ENCODE measurements at regions of chr7 and their contacts with region 1.

Region 1: GRCh38 chr7:22726345-22727185 is 435 bp upstream of the IL6 start:
- DNase-seq: no peak
- ATAC-seq: peak; percentile 83
- H3K4me3 ChIP-seq: no peak overlapping the region
- H3K27ac ChIP-seq: peak overlapping the region; percentile 62
- H3K4me1 ChIP-seq: peaks cover 24% of the 10 kb centered on the region
- H3K27me3 ChIP-seq: no peaks in the 10 kb centered on the region
- CTCF ChIP-seq: peak; percentile 88

Region 2: DNA sequence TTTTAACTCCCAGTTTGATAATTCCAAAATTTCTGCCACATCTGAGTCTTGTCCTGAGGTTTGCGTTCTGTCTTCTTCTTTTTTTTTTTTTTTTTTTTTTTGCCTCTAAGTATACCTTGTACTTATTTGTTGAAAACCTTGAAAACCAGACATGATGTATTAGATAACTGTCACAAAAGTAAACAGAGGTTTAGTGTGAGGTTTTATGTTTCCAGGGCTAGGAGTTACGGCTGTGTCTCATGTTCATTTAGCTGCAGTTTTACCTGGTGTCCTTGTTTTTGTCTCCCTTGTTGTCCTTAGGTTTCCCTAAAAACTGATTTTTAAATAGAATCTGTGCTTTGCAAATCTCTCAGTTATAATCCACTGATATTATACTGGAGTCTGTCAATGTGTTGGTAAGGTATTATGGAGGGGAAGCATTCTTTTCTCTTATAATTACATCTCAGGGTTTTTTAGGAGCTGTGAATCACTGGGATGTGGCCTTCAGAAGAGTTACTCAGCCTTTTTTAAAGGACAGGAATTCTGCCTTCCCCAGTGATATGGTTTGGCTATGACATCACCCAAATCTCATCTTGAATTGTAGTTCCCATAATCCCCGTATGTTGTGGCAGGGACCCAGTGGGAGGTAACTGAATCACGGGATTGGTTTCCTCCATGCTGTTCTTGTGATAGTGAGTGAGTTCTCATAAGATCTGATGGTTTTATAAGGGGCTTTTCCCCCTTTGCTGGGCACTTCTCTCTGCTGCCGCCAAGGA is 875.9 kb before region 1 on chr7:
- CTCF ChIA-PET with region 1: no interaction called
- POLR2A ChIA-PET with region 1: no interaction called
- in situ Hi-C with region 1: no loop called
- intact Hi-C with region 1: no loop called
- DNase-seq: no peak
- ATAC-seq: no peak
- H3K4me3 ChIP-seq: no peak overlapping the region
- H3K27ac ChIP-seq: no peak overlapping the region
- H3K4me1 ChIP-seq: no peaks in the 10 kb centered on the region
- H3K27me3 ChIP-seq: no peaks in the 10 kb centered on the region
- CTCF ChIP-seq: no peak

Region 3: GRCh38 chr7:22016507-22016906 is 710.1 kb before region 1 on chr7:
- CTCF ChIA-PET with region 1: no interaction called
- POLR2A ChIA-PET with region 1: no interaction called
- in situ Hi-C with region 1: no loop called
- intact Hi-C with region 1: no loop called
- DNase-seq: no peak
- ATAC-seq: no peak
- H3K4me3 ChIP-seq: no peak overlapping the region
- H3K27ac ChIP-seq: no peak overlapping the region
- H3K4me1 ChIP-seq: no peaks in the 10 kb centered on the region
- H3K27me3 ChIP-seq: peaks cover 10% of the 10 kb centered on the region
- CTCF ChIP-seq: no peak

Region 4: GRCh38 chr7:22565315-22565811 is 161.2 kb before region 1 on chr7:
- CTCF ChIA-PET with region 1: interaction called, 98 read pairs
- POLR2A ChIA-PET with region 1: interaction called, 4 read pairs
- in situ Hi-C with region 1: no loop called
- intact Hi-C with region 1: loop called (anchors 1 kb)
- DNase-seq: peak; percentile 66
- ATAC-seq: no peak
- H3K4me3 ChIP-seq: peak overlapping the region in 1 of 2 experiments; percentile 61; a peak in 2 of 4 replicates
- H3K27ac ChIP-seq: peak overlapping the region; percentile 85
- H3K4me1 ChIP-seq: peaks cover 49% of the 10 kb centered on the region
- H3K27me3 ChIP-seq: no peaks in the 10 kb centered on the region
- CTCF ChIP-seq: no peak

Region 5: DNA sequence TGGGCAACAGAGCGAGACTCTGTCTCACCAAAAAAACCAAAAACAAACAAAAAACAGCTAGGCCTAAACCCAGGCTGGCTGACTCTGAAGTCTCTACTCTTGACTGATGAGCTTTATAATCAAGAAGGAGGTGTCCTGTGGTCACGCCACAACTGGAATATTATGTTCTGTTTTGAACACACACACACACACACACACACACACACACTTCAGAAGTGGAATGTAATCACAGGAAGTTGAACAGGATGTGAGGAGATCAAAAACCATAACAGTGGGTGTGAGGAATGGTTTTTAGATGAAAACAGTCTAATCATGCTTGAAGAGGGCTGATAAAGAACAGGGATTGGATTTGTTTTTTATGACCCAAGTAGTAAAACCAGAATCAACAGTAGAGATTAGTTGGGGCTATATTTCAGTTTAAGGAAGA is 50.6 kb before region 1 on chr7:
- CTCF ChIA-PET with region 1: interaction called, 10 read pairs
- POLR2A ChIA-PET with region 1: no interaction called
- in situ Hi-C with region 1: no loop called
- intact Hi-C with region 1: no loop called
- DNase-seq: no peak
- ATAC-seq: no peak
- H3K4me3 ChIP-seq: no peak overlapping the region
- H3K27ac ChIP-seq: no peak overlapping the region
- H3K4me1 ChIP-seq: peaks cover 3% of the 10 kb centered on the region; the same call in 1 of the 2 replicates
- H3K27me3 ChIP-seq: no peaks in the 10 kb centered on the region
- CTCF ChIP-seq: no peak

Region 6: DNA sequence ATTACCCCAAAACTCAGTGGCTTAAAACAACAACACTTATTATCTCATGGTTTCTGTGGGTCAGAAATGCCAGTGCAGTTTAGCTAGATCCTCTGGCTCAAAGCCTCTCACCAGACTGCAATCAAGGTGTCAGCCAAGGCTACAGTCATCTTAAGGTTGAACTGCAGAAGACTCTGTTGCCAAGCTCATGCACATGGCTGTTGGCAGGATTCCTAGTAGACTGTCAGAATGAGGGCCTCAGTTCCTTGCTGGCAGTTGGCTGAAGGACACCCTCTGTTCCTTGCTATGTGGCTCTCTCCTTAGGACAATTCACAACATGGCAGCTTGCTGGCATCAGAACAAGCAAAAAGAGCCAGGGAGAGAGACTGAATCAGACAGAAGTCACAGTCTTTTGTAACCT is 61.4 kb after region 1 on chr7:
- CTCF ChIA-PET with region 1: no interaction called
- POLR2A ChIA-PET with region 1: interaction called, 14 read pairs
- in situ Hi-C with region 1: no loop called
- intact Hi-C with region 1: no loop called
- DNase-seq: no peak
- ATAC-seq: no peak
- H3K4me3 ChIP-seq: no peak overlapping the region
- H3K27ac ChIP-seq: no peak overlapping the region
- H3K4me1 ChIP-seq: no peaks in the 10 kb centered on the region
- H3K27me3 ChIP-seq: no peaks in the 10 kb centered on the region
- CTCF ChIP-seq: no peak

Measured in Panc1 (cell line).